Left cardiac atrium (tissue), 4 donors: ENCODE measurements at regions of chr10 and their contacts with region 1.

Region 1: DNA sequence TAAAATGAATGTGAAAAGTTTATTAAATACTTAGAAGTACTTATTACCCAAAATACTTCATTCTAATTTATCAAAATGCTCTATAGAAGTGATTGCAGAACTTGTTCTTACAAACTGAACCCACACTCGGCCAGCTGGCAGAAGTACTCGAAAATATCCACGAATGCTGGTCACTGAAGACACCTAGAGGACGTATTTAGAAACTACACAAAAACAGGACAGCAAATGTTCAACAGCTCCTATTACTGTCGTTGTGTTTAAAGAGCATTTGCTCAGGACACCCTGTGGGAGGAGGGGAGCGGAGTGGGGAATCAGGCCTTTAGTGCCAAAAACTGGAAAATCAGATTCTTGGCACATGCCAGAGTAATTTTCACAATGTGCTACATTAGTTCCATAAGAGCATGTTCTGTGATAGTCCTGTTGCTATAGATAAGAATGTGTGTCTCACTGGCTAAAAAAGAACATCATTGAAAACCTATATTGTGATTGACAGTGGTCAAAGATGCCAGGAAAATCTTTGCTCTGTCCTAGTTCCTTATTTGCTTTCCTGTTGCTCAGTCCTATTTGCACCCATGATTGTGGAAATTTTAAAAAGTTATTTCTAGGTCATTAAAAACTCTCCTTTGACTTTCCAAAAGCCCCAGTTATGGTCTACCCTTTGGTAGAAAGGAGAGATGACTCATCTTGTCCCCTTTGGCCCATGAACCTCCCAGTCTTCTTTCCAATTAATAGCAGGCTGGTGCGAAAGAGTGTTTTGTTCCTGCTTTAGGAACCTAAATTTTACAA is 49.0 kb upstream of the NRBF2 start:
- DNase-seq: peak; percentile 73
- ATAC-seq: peak; percentile 91 to 94

Region 2: DNA sequence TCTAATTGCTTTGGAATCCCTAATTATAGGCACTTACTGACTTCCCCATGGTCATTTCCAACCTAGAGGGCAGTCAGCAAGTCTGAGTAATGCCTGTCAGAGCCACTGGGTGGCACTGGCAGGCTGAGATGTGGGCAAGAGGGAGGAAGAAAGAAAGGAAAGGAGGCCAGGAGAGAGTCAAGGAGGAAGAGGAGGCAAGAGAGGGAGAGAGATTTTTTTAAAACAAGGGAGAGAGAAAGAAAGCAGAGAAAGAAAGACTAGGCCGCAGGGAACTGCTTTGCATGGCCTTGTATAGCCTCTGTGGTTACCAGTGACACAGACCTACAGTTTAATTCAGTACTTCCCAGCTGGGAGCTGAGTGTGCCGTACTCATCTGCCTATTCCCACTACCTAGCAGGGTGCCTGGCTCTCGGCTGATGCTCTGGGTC is 490.0 kb before region 1 on chr10:
- intact Hi-C with region 1: loop called in 1 of 2 experiments (anchors 1 kb)
- DNase-seq: peak; percentile 39
- ATAC-seq: peak; percentile 87 to 94

Region 3: GRCh38 chr10:62610649-62611229 is 473.4 kb before region 1 on chr10:
- intact Hi-C with region 1: loop called (anchors 5 to 10 kb)
- DNase-seq: peak; percentile 43
- ATAC-seq: peak; percentile 76 to 86

Region 4: DNA sequence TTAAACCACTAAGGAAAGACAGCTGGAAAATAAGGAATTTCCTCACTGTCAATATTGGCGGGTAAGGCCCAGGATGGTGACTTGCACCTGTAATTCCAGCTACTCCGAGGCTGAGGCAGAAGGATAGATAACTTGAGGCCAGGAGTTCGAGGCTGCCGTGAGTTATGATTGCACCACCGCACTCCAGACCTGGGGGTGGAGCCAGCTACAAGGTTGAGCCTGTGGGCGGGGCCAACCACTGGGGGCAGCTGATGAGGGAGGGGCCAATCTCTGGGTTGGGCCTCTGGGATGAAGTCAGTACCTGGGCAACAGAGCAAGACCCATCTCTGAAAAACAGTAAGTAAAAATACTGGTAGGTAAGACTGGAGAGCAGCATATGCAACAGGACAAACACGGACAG is 359.6 kb before region 1 on chr10:
- intact Hi-C with region 1: no loop called
- DNase-seq: no peak
- ATAC-seq: no peak

Region 5: DNA sequence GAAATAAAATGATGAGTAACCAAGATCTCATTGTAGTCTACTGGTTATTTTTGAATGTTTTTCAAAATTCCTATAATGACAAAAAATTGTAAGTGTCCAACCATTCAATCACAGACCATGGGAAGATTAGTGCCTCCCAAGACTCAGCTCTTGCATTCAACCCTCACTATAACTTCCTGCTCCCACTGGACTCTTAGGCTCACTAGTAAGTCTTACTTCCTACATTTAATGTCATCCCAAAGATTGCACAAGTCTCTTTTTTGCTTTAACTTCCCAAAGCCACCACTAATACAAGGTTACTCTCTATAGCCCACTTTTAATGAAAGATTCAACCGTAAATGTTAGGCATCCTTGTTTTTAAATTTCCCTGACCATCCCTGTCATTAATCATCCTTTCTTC is 62.9 kb before region 1 on chr10:
- intact Hi-C with region 1: no loop called
- DNase-seq: no peak
- ATAC-seq: no peak